OCI-LY7 (cell line): ENCODE measurements at regions of chr7 and their contacts with region 1.

Region 1: DNA sequence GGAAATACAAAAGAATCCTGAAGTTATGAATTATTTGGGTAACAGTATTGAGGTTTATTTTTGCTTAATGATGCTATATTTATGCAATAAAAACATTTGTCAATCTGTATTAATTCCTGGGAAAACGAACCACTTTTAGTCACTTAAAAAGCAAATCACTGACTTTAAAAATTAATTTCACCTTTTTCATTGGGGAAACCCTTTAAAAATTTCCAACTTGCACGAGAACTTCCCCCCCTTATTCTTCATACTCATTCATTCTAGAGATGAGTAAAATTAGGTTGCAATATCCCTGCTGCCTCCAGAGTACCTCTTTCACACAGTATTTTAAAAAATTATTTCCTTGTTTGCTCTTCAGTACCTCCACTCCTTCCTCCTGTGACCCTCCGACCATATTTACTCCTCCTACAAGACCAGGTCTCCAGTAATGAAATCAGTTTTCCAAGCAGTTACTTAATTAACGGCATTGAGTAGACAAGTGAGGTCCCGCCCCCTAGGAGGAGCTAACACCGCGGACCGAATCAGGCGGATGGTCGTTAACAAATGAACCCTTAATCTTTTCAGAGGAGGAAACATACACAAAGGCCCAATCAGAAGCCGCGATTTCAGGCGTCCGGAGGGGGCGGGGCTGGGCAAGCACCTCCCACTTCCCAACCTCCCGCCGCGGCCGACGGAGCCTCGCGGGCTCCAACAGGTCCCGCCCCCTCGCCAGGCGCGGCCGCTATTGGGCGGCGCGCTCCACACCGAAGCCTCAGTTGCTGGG is 465 bp upstream of the TRIM24 start:
- DNase-seq: no peak
- H3K4me3 ChIP-seq: peak overlapping the region; percentile 67
- H3K27ac ChIP-seq: peak overlapping the region; percentile 26
- H3K4me1 ChIP-seq: peaks cover 7% of the 10 kb centered on the region
- CTCF ChIP-seq: 0 out of 2 replicates have a peak, but pooled peaks have one; percentile 20

Region 2: DNA sequence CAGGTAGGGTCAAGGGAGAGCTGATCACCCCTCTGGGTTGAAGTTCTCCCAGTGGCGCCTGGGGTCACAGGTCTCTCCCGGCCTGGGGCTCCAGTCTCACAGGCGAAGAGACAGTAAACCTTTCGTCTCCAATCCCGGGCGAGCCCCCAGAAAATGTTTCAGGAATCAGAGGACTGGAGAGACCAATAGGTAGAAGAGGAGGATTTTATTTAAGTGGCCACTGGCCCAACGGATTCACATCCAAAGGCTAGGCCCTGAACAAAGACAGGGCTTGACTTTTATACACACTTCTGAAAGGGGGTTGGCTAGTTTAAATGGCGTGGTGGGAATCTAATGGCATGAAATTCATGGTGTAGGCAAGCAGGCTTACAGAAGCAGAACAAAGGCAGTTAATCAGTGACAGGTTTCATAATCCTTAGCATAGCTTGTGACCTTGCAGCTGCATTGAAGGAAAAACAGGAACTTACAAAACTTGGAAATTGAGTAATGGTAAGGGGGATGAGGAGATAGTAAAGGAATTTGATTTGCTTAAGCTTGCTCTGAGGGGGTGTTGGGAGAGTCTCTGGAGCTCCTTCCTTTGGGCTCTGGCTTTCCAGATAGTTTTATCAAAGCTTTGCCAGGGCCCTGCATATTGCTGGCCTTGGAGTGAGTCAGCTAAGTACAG is 106.0 kb after region 1 on chr7:
- CTCF ChIA-PET with region 1: no interaction called
- POLR2A ChIA-PET with region 1: no interaction called
- intact Hi-C with region 1: loop called (anchors 5 kb)
- DNase-seq: peak; percentile 29
- H3K4me3 ChIP-seq: no peak overlapping the region
- H3K27ac ChIP-seq: no peak overlapping the region
- H3K4me1 ChIP-seq: no peaks in the 10 kb centered on the region
- CTCF ChIP-seq: no peak